ENCODE measurements at regions of chr21 and their contacts with region 1.

Region 1: DNA sequence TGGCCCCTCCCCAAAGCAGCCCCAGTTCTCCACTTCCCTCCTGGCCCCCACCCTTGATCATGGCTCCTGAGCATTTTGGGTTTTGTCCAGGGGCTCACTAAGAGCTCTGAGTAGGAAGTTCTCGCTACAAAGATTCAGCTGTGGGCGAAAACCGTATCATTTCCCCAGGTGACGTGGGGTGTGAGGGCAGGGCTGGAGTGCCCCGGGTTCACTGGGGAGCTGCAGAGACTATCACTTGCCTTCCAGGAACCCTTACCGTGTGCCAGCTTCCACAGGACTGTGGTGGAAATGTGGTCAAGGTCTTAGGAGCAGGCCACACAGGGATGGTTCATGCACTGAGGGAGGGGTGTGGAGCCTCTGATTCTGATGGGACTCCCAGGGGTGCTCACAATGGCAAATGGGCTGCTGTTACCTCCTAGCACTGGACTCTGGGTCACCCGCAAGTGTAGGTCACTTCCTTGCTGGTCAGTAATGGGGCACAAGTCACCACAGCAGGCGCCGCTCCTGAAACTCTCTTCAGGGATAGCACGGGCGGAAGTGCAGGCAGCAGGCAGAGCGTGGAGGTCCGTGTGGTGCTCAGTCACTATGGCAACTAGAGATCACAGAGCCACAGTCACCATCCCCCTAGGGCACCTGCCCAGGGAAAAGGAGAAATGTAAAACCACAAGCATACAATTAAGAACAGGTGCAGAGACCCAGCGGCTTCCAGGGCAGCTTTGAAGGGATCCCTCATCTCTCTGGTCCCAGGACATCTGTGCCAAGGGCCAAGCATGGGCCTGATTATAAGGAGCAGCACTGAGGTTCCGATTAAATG is 35.4 kb downstream of the RSPH1 start:
- DNase-seq: peak; percentile 83
- ATAC-seq: peak; percentile 71
- H3K4me3 ChIP-seq: no peak overlapping the region
- H3K27ac ChIP-seq: peak overlapping the region; percentile 60
- H3K4me1 ChIP-seq: peaks cover 52% of the 10 kb centered on the region
- H3K27me3 ChIP-seq: no peaks in the 10 kb centered on the region
- CTCF ChIP-seq: no peak
- EP300 ChIP-seq: peak; percentile 59 to 97; a peak in 3 of 4 replicates
- POLR2A ChIP-seq: no peak
- RAD21 ChIP-seq: no peak

Region 2: GRCh38 chr21:42449296-42449927 is 11.2 kb before region 1 on chr21:
- CTCF ChIA-PET with region 1: interaction called, 3 read pairs
- POLR2A ChIA-PET with region 1: interaction called, 3 read pairs
- RAD21 ChIA-PET with region 1: interaction called, 15 read pairs
- SMC1A ChIA-PET with region 1: interaction called, 35 read pairs
- in situ Hi-C with region 1: no loop called
- intact Hi-C with region 1: no loop called
- DNase-seq: no peak
- ATAC-seq: peak; percentile 16
- H3K4me3 ChIP-seq: no peak overlapping the region
- H3K27ac ChIP-seq: peak overlapping the region; percentile 43
- H3K4me1 ChIP-seq: peaks cover 17% of the 10 kb centered on the region
- H3K27me3 ChIP-seq: no peaks in the 10 kb centered on the region
- CTCF ChIP-seq: no peak
- EP300 ChIP-seq: no peak
- POLR2A ChIP-seq: no peak
- RAD21 ChIP-seq: no peak

Region 3: DNA sequence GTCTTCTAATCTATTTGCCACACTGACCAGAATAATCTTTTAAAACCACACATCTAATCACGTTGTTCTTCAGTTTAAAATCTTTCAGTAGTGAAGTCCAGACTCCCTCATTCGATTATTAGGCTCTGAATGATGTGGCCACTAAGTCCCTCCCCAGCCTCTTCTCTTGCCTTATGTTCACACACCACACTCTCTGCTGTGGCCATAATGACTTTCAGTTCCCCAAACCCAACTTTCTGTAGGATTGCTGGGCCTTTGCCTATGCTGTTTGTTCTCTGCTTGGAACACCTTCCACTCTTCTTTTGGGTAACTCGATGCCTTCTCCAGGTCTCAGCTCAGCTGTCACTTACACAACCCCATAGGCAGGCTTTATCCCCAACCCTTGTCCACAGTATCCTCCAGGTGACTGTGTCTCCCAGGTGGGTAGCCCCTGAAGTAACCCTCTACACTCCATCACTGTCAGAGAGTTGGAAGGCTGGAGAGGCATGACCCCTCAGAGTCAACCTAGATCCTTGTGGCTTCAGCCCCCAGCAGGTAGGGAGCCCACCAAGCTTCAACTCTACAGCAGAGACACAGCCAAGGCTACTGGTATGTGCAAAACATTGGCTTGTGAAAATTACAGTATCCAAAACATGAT is 44.6 kb after region 1 on chr21:
- CTCF ChIA-PET with region 1: interaction called, 6 read pairs
- POLR2A ChIA-PET with region 1: interaction called, 4 read pairs
- RAD21 ChIA-PET with region 1: interaction called, 7 read pairs
- SMC1A ChIA-PET with region 1: interaction called, 8 read pairs
- in situ Hi-C with region 1: no loop called
- intact Hi-C with region 1: loop called (anchors 2 kb)
- DNase-seq: peak; percentile 72
- ATAC-seq: peak; percentile 99
- H3K4me3 ChIP-seq: no peak overlapping the region
- H3K27ac ChIP-seq: no peak overlapping the region
- H3K4me1 ChIP-seq: peaks cover 31% of the 10 kb centered on the region
- H3K27me3 ChIP-seq: no peaks in the 10 kb centered on the region
- CTCF ChIP-seq: no peak
- EP300 ChIP-seq: peak; percentile 58 to 88; a peak in 2 of 4 replicates
- POLR2A ChIP-seq: no peak
- RAD21 ChIP-seq: no peak